ENCODE measurements at regions of chr1 and their contacts with region 1.

Region 1: DNA sequence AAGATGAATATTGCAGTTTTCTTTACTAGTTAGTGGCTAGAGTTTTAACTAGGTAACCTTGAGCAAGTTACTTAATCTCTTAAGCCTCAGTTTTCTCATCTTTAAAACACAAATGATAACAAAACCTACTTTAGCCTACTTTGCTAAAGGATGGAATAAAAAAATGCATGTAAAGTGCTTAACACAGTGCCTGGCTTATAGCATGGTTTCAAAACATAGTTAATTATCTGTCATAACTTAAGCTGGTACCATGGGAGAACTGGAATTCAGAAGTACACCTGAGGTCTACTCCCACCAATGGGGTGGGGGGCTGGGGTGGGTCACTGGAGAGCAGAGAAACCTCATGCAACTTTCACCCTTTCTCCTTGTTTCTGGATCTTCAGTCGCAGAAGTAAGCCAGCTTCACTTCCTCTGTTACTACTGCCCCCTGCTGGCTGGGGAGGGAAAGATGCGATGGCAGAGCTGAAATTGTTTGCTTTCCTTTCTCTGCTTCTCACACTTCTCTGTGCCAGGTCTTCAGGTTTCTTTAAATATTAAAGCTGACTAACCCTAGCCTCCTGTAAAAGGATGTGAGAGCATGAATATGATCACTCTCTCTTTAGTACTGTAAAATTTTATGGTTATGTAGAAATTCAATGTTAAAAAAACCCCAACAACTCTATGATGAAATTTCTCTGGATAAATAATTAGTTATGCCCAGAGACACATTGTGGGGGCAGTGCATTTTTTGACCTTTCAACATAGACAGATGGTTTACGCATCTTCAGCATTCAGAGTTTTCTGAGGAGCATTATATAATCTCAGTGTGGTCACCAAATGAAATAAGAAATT is 324.2 kb downstream of the HLX start:
- DNase-seq: peak; percentile 87
- ATAC-seq: peak; percentile 53

Region 2: GRCh38 chr1:220810179-220810653 is 393.2 kb before region 1 on chr1:
- intact Hi-C with region 1: loop called (anchors 10 kb)
- DNase-seq: peak; percentile 91
- ATAC-seq: peak; percentile 77

Region 3: GRCh38 chr1:220908757-220909156 is 294.7 kb before region 1 on chr1:
- intact Hi-C with region 1: loop called (anchors 2 kb)
- DNase-seq: no peak
- ATAC-seq: no peak

Region 4: DNA sequence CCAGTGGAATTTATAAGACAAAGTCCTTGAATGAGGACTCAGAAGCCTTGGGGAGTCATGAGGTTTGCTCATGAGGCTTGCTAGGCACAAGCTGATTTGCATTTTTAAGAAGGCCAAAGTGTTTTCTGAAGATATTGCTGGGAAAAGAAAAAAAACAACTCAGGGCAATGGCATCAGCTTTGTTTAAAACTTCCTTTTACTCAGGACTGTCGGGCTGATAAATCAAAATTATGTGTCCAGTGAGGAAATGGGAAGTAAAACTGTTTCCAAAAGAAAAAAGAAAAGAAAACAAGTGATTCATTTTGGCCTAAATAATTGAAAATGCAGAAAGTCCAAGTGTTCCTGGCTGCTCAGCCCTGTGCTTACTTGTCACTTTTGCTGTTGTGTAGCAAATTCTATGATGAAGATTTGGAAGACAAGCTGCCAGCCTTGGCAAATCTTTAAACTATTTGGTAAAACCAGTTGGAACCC is 41.8 kb before region 1 on chr1:
- intact Hi-C with region 1: loop called (anchors 5 kb)
- DNase-seq: no peak
- ATAC-seq: peak; percentile 48

Region 5: DNA sequence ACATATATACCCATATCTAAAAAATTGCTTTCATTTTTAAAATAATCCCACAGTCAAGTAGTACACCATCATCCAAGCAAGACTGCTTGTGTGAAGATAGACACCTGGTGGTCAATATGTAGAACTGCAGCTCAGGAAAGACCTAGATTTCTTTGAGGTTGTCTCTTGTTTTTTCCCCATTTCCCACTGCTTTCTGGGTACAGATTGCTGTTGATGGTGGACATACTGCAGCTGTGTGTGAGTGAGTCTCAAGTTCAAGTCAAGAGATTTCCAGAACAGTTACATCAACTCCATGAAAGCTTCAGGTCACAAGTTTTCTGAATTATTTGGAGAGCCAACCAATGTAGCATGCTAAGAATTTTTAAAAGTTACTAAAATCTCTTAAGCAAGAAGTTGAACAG is 232.1 kb after region 1 on chr1:
- intact Hi-C with region 1: loop called (anchors 10 kb)
- DNase-seq: no peak
- ATAC-seq: peak; percentile 72

Measured in Right ventricle myocardium inferior (tissue), 1 donor.